Activated CD8-positive, alpha-beta T cell treated with anti-CD3 and anti-CD28 coated beads for 36 hours (primary cell): ENCODE measurements at regions of chr5 and their contacts with region 1.

Region 1: DNA sequence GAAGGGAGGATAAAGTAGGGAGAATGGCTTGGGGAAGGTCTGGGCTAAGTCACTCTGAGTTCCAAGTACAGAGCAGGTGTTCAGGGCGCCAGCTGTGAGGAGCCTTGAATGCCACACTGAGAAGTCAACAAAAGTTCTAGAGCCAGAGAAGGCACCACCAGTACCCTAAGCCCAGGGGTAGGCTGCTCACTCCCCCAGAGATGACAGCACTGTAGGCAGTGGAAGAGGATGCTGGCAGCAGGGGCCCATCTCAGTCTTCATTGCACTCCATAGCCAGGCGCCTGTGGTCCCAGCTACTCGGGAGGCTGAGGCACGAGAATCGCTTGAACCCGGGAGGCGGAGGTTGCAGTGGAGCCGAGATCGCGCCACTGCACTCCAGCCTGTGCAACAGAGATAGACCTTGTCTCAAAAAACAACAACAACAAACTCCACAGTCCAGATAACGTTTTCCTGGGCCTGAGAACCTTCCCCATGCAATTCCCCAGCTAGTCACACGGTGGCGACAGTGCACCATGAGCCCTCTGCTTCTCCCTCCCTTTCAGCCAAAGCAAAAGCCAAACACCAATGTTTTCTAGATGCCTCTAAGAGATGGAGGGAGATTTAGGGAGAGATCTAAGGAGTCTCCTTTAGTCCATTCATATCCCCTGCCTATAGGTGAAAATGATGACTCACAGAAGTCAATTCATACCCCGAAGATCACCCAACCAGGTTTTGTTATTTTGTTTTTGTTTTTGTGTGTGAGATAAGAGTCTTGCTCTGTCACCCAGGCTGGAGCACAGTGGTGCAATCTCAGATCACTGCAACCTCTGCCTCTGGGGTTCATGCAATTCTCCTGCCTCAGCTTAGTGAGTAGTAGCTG is 19.8 kb upstream of the NSD1 start:
- DNase-seq: peak; percentile 86
- ATAC-seq: peak; percentile 72
- H3K4me3 Mint-ChIP-seq: no peak overlapping the region
- H3K27ac Mint-ChIP-seq: no peak overlapping the region
- H3K4me1 Mint-ChIP-seq: peaks cover 18% of the 10 kb centered on the region
- H3K27me3 Mint-ChIP-seq: no peaks in the 10 kb centered on the region
- CTCF ChIP-seq: peak; percentile 98

Region 2: GRCh38 chr5:176774216-176775170 is 339.3 kb before region 1 on chr5:
- CTCF ChIA-PET with region 1: no interaction called
- POLR2A ChIA-PET with region 1: no interaction called
- intact Hi-C with region 1: no loop called
- DNase-seq: no peak
- ATAC-seq: no peak
- H3K4me3 Mint-ChIP-seq: no peak overlapping the region
- H3K27ac Mint-ChIP-seq: no peak overlapping the region
- H3K4me1 Mint-ChIP-seq: no peaks in the 10 kb centered on the region
- H3K27me3 Mint-ChIP-seq: peaks cover 20% of the 10 kb centered on the region
- CTCF ChIP-seq: no peak

Region 3: GRCh38 chr5:176803940-176804498 is 309.8 kb before region 1 on chr5:
- CTCF ChIA-PET with region 1: no interaction called
- POLR2A ChIA-PET with region 1: no interaction called
- intact Hi-C with region 1: no loop called
- DNase-seq: peak; percentile 46
- ATAC-seq: no peak
- H3K4me3 Mint-ChIP-seq: no peak overlapping the region
- H3K27ac Mint-ChIP-seq: no peak overlapping the region
- H3K4me1 Mint-ChIP-seq: no peaks in the 10 kb centered on the region
- H3K27me3 Mint-ChIP-seq: peaks cover 41% of the 10 kb centered on the region
- CTCF ChIP-seq: no peak

Region 4: DNA sequence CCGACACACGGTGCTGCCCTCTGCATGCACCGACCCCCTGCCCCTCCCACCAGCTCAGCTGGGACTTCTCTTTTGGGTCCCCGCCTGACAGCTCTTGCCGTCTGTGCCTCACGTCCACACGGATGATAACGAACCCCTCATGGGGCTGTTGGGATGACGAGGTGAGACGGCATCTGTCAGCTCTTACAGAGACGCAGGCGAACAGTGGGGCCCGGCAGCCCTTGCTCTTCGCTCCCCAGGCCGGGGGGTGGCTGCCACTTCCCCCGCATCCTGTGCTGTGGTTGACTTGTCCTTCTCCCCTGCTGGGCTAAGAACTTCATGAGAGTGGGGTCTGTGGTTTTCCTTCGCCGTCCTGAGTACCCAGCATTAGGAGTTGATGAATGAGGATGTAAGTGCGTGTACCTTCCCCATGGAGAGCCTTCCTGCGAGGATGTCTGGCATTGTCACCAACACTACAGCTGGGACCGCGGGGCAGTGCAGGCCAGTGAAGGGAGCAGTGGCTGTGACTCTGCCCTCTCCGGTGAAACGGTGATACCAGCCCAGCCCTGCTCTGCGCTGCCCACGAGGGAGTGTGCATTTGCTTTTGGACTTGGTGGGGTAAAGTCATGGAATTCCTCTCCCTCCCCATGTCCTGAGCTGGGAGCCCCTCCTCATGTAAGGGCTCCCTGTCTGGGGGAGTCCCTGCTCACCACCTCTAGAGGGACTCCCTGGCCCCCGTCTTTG is 237.9 kb before region 1 on chr5:
- CTCF ChIA-PET with region 1: no interaction called
- POLR2A ChIA-PET with region 1: no interaction called
- intact Hi-C with region 1: no loop called
- DNase-seq: peak; percentile 52
- ATAC-seq: peak; percentile 71
- H3K4me3 Mint-ChIP-seq: no peak overlapping the region
- H3K27ac Mint-ChIP-seq: no peak overlapping the region
- H3K4me1 Mint-ChIP-seq: peaks cover 10% of the 10 kb centered on the region
- H3K27me3 Mint-ChIP-seq: peaks cover 30% of the 10 kb centered on the region
- CTCF ChIP-seq: no peak

Region 5: DNA sequence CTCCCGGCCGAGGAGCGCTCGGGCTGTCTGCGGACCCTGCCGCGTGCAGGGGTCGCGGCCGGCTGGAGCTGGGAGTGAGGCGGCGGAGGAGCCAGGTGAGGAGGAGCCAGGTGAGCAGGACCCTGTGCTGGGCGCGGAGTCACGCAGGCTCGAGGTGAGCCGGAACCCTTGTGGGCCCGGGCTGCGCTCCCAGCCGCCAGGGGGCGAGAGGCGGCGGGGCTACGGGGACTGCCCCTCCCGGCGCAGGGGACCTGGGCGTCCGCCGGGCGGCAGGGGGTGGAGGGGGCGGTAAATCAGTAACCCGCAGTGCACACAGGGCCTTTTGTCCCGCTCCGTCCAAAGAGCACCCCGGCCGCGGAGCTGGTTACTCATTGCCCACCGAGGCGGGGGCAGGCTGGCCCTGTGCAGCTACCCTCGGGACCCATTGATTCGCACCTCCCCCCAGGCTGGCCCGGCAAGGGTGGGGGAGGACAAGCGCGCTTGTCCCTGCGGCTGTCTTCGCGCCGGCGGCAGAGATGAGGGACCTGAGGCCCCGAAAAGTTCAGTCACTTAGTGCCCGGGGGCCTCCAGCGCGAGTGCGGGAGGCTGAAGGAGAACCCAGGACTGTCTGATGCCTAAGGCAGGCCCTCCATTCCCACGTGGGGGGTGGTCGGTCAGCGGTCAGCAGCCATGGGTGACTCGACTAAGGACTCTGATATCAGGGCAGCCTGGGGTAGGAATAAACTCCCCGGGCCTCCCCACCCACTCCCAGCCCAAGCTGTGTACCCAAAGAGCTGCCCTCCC is 26.7 kb before region 1 on chr5:
- CTCF ChIA-PET with region 1: interaction called, 37 read pairs
- POLR2A ChIA-PET with region 1: no interaction called
- intact Hi-C with region 1: no loop called
- DNase-seq: peak; percentile 64
- ATAC-seq: peak; percentile 85
- H3K4me3 Mint-ChIP-seq: peak overlapping the region; percentile 22
- H3K27ac Mint-ChIP-seq: no peak overlapping the region
- H3K4me1 Mint-ChIP-seq: peaks cover 3% of the 10 kb centered on the region
- H3K27me3 Mint-ChIP-seq: peaks cover 15% of the 10 kb centered on the region
- CTCF ChIP-seq: peak; percentile 78

Region 6: DNA sequence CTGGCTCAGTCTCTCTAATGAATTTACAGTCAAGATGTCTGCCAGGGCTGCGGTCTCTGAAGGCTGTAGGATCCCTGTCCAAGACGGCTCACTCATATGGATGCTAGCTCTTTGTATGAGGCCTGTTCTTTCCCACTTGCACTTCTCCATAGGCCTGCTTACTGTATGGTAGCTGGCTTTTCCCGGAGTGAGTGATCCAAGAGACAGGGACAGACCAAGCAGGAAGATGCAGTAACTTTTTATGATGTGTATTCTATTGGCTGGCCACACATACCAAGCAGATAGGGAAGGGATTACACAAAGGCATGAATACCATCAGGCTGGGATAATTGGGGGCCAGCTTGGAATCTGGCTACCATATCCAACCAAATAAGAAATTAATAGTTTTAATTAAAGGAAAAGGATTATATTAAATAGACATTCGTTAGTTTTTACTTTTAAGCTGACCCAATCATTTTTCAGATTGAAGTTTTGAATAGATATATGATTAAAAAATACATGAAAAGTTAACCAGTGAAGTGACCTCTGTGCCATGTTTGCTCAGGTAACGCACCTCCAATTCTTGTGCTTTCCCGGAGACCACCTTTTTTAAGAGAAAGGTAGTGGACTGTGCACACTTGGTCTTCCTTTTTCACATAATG is 40.3 kb after region 1 on chr5:
- CTCF ChIA-PET with region 1: interaction called, 20 read pairs
- POLR2A ChIA-PET with region 1: interaction called, 4 read pairs
- intact Hi-C with region 1: no loop called
- DNase-seq: no peak
- ATAC-seq: no peak
- H3K4me3 Mint-ChIP-seq: no peak overlapping the region
- H3K27ac Mint-ChIP-seq: no peak overlapping the region
- H3K4me1 Mint-ChIP-seq: peaks cover 10% of the 10 kb centered on the region
- H3K27me3 Mint-ChIP-seq: no peaks in the 10 kb centered on the region
- CTCF ChIP-seq: no peak

Region 7: DNA sequence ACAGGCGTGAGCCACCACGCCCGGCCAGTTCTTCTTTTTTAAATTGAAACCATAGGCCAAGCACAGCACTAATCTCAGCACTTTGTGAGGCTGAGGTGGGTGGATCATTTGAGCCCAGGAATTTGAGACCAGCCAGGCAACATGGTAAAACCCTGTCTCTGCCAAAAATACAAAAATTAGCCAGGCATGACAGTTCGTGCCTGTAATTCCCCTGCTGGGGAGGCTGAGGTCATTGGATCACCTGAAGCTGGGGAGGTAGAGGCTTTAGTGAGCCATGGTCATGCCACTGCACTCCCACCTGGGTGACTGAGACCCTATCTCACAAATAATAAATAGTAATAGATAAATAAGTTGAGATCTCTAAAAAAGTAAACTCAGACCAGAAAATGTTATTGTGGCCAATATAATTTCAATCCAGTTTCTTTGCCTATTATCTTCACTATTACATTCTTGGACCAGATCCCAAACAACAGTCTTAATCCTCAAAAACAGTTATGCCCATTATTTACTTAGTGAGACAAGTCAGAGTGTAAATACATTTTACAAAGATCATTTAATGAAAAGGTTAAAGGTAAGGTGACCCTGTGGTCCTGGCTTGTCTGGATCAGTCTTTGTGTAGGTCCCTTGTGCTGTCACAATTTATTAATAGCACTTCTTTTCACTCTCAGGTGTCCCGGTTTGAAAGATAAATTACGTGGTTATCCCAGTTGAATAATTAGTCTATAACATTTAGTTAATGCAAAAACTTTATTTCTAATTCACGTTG is 136.1 kb after region 1 on chr5:
- CTCF ChIA-PET with region 1: interaction called, 22 read pairs
- POLR2A ChIA-PET with region 1: no interaction called
- intact Hi-C with region 1: no loop called
- DNase-seq: no peak
- ATAC-seq: no peak
- H3K4me3 Mint-ChIP-seq: no peak overlapping the region
- H3K27ac Mint-ChIP-seq: no peak overlapping the region
- H3K4me1 Mint-ChIP-seq: no peaks in the 10 kb centered on the region
- H3K27me3 Mint-ChIP-seq: no peaks in the 10 kb centered on the region
- CTCF ChIP-seq: no peak

Region 8: GRCh38 chr5:177311723-177312648 is 198.2 kb after region 1 on chr5 and contains the start of gene MXD3:
- CTCF ChIA-PET with region 1: interaction called, 26 read pairs
- POLR2A ChIA-PET with region 1: interaction called, 3 read pairs
- intact Hi-C with region 1: no loop called
- DNase-seq: peak; percentile 100
- ATAC-seq: peak; percentile 87
- H3K4me3 Mint-ChIP-seq: peak within 1 kb of the TSS; percentile 89
- H3K27ac Mint-ChIP-seq: peak within 1 kb of the TSS; percentile 91
- H3K4me1 Mint-ChIP-seq: peaks cover 26% of the 10 kb centered on the region
- H3K27me3 Mint-ChIP-seq: no peaks in the 10 kb centered on the region
- CTCF ChIP-seq: no peak
- total RNA-seq, gene MXD3: 19.3 to 25.1 TPM

Region 9: DNA sequence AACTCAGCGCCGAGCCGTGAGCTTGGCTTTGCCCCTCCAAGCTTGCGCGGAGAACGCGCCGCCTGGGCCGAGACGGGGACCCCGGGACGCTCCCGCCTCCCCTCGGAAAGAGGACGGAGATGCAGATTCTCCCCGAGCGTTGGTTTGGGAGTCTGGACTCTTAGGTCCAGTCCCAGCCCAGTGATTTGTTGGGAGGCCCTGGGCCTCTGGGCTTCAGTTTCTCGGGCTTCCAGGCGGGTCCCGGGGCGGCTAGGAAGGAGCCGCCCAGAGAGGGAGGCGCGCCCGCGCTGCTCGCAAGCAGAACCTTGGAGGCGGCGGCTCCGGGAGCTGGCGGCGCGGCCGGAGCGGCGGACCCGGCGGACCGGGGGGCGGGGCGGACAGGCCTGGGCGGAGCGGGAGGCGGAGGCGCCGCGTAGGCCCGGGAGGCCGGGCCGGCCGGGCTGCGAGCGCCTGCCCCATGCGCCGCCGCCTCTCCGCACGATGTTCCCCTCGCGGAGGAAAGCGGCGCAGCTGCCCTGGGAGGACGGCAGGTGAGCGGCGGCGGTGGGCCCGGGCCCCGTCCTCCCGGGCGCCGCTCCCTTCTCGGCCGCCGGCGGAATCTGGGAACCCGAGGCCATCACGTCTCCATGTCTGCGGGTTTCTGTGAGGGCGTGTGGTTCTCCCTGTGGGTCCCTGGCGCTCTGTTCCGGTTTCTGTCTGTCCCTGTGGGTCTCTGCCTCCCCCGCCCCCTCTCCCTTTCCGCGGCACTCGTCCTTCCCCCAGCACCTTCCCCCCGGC is 486.1 kb after region 1 on chr5 and contains the start of gene B4GALT7:
- CTCF ChIA-PET with region 1: no interaction called
- POLR2A ChIA-PET with region 1: no interaction called
- intact Hi-C with region 1: no loop called
- DNase-seq: peak; percentile 82
- ATAC-seq: peak; percentile 93
- H3K4me3 Mint-ChIP-seq: peak within 1 kb of the TSS; percentile 88
- H3K27ac Mint-ChIP-seq: peak within 1 kb of the TSS; percentile 88
- H3K4me1 Mint-ChIP-seq: peaks cover 33% of the 10 kb centered on the region
- H3K27me3 Mint-ChIP-seq: no peaks in the 10 kb centered on the region
- CTCF ChIP-seq: no peak
- total RNA-seq, gene B4GALT7: 19.3 to 21.9 TPM